AG04449 (cell line): ENCODE measurements at regions of chr17 and their contacts with region 1.

Region 1: DNA sequence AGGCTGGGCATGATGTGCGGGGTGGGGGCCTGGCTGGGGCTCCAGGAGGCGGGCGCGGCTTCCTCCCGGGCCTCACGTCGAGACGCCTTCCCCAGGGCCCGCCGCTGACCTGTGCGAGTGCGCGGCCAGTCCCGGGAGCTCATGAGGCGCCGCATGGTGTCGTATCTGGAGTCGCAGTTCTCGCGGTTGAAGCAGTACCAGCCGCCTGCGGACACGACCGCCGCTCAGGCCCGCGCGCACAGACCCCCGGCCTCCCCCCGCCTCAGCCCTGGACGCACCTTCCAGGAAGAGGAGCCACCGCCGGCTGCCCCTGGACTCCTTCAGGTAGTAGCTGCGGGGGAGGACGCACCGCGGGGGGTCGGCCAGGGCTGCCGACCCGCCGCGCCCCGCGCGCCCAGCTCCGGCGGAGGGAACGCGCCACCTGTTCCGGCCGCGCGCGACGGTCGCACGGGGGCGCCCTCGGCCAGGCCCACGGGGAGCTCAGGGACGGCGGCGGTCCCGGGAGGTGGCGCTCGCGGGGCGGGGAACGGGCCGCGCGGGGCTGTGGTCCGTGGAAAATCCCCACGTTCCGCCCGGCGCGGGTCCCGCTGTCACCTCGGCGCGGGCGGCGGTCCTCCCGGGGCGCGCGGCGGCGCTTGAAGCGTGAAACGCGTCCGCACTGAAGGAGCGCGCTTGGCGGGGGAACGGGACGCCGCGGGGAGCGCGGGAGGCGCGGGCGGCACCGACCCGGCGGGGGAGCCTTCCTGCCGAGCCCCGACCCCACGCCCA is 1.4 kb downstream of the NOTUM start:
- DNase-seq: no peak
- H3K4me3 ChIP-seq: peak overlapping the region; percentile 24; the same call in 1 of the 2 replicates
- CTCF ChIP-seq: peak; percentile 80

Region 2: GRCh38 chr17:81885869-81886549 is 73.5 kb before region 1 on chr17:
- CTCF ChIA-PET with region 1: no interaction called
- POLR2A ChIA-PET with region 1: no interaction called
- DNase-seq: no peak
- H3K4me3 ChIP-seq: no peak overlapping the region
- CTCF ChIP-seq: no peak

Region 3: DNA sequence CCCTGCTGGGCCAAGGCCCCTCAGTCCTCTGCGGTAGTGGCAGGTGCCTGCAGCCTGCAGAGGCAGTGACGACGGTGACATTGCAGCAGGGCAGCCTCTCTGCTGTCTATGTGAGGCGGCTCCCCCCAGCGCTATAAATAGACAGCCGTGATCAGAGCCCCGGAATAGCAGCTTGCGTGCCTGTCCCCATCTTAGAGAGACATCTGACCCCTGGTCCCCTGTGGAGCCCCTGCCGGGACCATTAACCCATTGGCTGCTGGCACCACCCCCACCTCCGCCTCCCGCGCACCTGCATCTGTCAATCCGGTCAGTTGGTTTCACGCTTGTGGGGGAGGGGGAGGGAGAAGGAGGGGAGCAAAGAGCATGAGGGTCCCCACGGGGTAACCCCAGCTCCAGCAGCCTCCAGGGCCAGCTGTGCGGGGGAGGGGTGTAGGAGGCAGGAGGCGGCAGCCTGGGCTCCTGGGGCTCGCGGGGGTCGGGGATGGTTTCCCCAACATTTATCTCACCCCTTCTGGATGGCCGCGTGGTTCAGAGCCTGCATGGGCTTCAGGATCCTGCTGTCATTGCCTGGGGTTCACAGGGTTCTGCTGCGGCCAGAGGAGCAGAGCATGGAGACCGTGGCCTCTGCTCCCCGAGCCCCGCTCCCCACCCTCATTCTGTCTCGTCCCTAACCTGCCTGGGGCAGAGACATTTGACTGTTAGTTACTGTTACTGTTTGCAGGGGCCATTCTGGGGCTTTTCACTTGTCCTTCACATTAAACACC is 17.6 kb before region 1 on chr17:
- CTCF ChIA-PET with region 1: interaction called, 13 read pairs
- POLR2A ChIA-PET with region 1: no interaction called
- DNase-seq: no peak
- H3K4me3 ChIP-seq: no peak overlapping the region
- CTCF ChIP-seq: no peak

Region 4: GRCh38 chr17:81977211-81978027 is 17.9 kb after region 1 on chr17 and contains the start of gene ASPSCR1:
- CTCF ChIA-PET with region 1: interaction called, 15 read pairs
- POLR2A ChIA-PET with region 1: no interaction called
- DNase-seq: peak; percentile 26
- H3K4me3 ChIP-seq: peak within 1 kb of the TSS; percentile 76
- CTCF ChIP-seq: no peak

Region 5: GRCh38 chr17:82003411-82004381 is 44.1 kb after region 1 on chr17:
- CTCF ChIA-PET with region 1: interaction called, 11 read pairs
- POLR2A ChIA-PET with region 1: no interaction called
- DNase-seq: peak; percentile 63
- H3K4me3 ChIP-seq: no peak overlapping the region
- CTCF ChIP-seq: no peak

Region 6: GRCh38 chr17:82022981-82023374 is 63.4 kb after region 1 on chr17 and contains the start of gene LRRC45:
- CTCF ChIA-PET with region 1: interaction called, 290 read pairs
- POLR2A ChIA-PET with region 1: interaction called, 10 read pairs
- DNase-seq: peak; percentile 94
- H3K4me3 ChIP-seq: peak within 1 kb of the TSS; percentile 81
- CTCF ChIP-seq: no peak

Region 7: GRCh38 chr17:82037113-82037888 is 77.8 kb after region 1 on chr17 and contains the start of gene DCXR:
- CTCF ChIA-PET with region 1: interaction called, 39 read pairs
- POLR2A ChIA-PET with region 1: interaction called, 3 read pairs
- DNase-seq: peak; percentile 49
- H3K4me3 ChIP-seq: peak within 1 kb of the TSS; percentile 72
- CTCF ChIP-seq: peak; percentile 96

Region 8: DNA sequence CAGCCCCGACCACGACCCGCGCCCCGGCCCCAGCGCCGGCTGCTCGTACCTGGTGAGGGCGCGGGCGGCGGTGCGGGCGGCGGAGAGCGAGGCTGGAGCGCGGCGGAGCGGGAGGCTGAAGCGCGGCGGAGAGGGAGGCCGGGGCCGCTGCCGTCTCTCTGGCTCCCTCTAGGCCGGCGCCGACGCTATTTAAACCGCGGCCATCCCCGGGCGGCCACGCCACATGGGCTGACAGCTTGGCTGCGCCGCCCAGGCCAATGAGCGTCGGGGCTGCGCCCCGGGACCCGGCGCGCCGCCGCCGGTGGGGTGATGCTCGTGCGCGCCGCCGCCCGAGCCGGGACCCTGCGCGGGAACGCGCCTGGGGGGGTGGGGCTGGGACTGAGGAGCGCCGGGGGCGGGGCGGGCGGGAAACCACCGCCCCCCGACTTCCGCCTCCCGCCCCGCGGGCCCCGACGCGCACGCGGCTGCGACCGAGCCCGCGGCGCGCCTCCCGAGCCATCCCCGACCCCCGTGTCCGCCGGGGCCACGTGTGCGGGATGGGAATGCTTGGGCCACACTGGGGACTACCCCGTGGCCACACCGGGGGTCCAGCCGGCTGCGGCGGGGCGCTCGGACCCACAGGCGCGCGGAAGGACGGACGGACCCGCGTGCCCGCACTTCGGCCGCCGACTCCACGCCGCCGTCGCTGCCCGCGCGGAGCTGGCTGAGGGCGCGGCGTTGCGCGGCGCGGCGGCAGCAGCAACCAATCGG is 138.7 kb after region 1 on chr17 and contains the start of gene FASN:
- CTCF ChIA-PET with region 1: no interaction called
- POLR2A ChIA-PET with region 1: no interaction called
- DNase-seq: peak; percentile 42
- H3K4me3 ChIP-seq: peak within 1 kb of the TSS; percentile 70
- CTCF ChIP-seq: peak; percentile 76